CD14-positive monocyte (primary cell): ENCODE measurements at regions of chr10 and their contacts with region 1.

Region 1: DNA sequence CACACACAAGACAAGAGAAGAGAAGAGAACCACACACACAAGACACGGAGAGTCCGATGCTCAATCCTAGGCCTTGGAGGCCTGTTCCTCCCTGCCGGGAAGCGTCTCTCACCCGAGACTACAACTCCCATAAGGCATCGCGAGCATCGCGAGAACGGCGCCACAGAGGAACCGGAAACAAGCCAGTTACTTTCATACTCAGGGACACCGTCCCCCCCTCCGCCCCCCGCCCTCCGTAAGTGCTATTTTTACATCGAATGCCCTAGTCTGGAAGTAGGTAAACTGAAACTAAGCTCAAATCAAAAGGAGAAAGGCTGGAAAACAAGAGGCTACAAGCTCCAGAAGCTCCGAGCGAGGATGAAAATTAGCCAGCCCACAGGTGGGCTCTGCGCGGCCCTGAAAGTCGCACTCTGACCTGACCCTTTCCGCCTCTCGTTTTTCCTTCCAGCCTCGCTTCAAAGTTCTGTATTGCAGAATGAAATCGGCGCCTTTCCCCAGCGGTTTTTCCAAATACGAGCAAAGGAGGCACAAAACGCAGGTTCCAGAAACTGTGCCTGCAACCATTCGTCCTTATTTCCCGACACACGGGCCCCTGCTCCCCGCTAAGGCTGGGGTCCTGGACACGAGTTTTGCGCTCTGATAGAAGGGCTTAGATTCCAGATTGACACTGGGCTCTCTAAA is 11.5 kb upstream of the DNAJC12 start:
- DNase-seq: peak; percentile 88 to 89 (median 89)
- H3K4me3 ChIP-seq: peak overlapping the region; percentile 69 to 96 (median 72)
- H3K4me3 Mint-ChIP-seq: peak overlapping the region; percentile 93 to 99
- H3K27ac ChIP-seq: peak overlapping the region; percentile 71 to 93
- H3K27ac Mint-ChIP-seq: peak overlapping the region; percentile 93 to 99 (median 98)
- H3K4me1 ChIP-seq: peaks cover 0 to 3% of the 10 kb centered on the region in 2 donors
- H3K4me1 Mint-ChIP-seq: peaks cover 8% of the 10 kb centered on the region
- H3K27me3 ChIP-seq: no peaks in the 10 kb centered on the region
- H3K27me3 Mint-ChIP-seq: peaks cover 0 to 4% (median 2%) of the 10 kb centered on the region in 3 donors
- CTCF ChIP-seq: no peak

Region 2: DNA sequence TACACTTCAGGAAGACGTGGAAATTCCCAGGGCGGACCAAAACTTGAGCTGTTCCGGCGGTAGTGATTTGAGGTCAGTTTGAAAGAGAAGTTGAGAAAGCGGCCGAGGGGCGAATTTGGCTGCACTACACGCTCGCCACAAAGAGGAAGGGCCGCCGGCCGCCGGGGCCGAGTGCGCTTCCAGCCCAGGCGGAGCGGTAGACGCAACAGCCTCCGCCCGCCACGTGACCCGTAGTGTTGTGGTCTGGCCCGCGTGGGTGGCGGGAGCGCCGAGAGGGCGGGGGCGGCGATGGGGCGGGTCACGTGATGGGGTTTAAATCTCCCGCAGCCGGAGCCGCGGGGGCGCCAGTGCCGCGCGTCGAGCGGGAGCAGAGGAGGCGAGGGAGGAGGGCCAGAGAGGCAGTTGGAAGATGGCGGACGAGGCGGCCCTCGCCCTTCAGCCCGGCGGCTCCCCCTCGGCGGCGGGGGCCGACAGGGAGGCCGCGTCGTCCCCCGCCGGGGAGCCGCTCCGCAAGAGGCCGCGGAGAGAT is 34.9 kb after region 1 on chr10 and contains the start of gene SIRT1:
- intact Hi-C with region 1: loop called in 1 of 2 experiments (anchors 2 kb)
- DNase-seq: peak; percentile 96 to 97 (median 97)
- H3K4me3 ChIP-seq: peak within 1 kb of the TSS; percentile 59 to 89 (median 69)
- H3K4me3 Mint-ChIP-seq: peak within 1 kb of the TSS; percentile 89 to 94
- H3K27ac ChIP-seq: peak within 1 kb of the TSS; percentile 73 to 87
- H3K27ac Mint-ChIP-seq: peak within 1 kb of the TSS; percentile 93 to 97 (median 96)
- H3K4me1 ChIP-seq: peaks cover 24 to 32% of the 10 kb centered on the region in 2 donors
- H3K4me1 Mint-ChIP-seq: peaks cover 30% of the 10 kb centered on the region
- H3K27me3 ChIP-seq: no peaks in the 10 kb centered on the region
- H3K27me3 Mint-ChIP-seq: peaks cover 0 to 4% (median 2%) of the 10 kb centered on the region in 3 donors
- CTCF ChIP-seq: no peak
- polyA plus RNA-seq, gene SIRT1: 4.4 to 8.4 (median 8.3) TPM

Region 3: GRCh38 chr10:68074775-68075549 is 225.5 kb after region 1 on chr10 and contains the start of gene HERC4:
- intact Hi-C with region 1: loop called in 1 of 2 experiments (anchors 10 kb)
- DNase-seq: peak; percentile 87 to 95 (median 94)
- H3K4me3 ChIP-seq: peak within 1 kb of the TSS; percentile 68 to 100 (median 92)
- H3K4me3 Mint-ChIP-seq: peak within 1 kb of the TSS; percentile 97
- H3K27ac ChIP-seq: peak within 1 kb of the TSS; percentile 96 to 100
- H3K27ac Mint-ChIP-seq: peak within 1 kb of the TSS; percentile 92 to 97 (median 95)
- H3K4me1 ChIP-seq: peaks cover 15 to 31% of the 10 kb centered on the region in 2 donors
- H3K4me1 Mint-ChIP-seq: peaks cover 30% of the 10 kb centered on the region
- H3K27me3 ChIP-seq: no peaks in the 10 kb centered on the region
- H3K27me3 Mint-ChIP-seq: no peaks in the 10 kb centered on the region
- CTCF ChIP-seq: no peak
- polyA plus RNA-seq, gene HERC4: 10.7 to 17.5 (median 14.3) TPM

Region 4: DNA sequence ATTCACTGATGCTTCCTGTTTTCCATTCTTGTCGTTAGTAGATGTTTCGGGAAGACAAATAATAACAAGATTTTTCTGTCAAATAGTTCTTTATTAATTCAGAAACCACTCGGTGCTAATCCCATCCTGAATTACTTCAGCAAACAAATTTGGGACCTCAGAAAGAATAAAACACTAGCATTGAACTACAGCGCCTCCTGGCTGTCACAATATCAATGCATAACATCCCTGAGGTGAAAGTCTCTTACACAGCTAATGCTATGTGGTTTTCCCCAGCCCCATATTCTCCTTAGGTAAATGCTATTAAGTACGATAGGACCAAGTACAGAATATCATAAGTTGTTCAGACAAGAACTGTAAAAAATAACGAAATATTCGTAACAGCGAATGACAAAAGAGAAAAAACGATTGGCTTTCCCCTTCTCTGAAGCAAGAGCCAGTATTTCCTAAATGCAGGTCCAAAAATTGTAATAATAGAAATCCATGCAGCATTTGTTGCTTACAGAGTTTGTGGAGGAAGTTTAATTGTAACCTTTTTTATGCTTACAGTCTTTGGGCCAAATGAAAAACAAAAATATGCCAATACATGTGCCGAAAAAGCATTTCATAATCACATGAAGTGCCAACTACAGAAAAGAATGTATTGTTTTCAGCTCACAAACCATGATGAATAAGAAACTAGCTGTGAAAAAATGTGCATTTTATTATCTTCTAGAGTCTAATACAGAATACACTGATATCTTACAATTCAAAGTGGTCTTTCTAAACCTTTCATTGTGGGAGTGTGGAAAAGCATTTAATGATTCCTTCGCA is 307.1 kb after region 1 on chr10:
- intact Hi-C with region 1: loop called in 1 of 2 experiments (anchors 10 kb)
- DNase-seq: peak; percentile 16 to 61 (median 48)
- H3K4me3 ChIP-seq: no peak overlapping the region
- H3K4me3 Mint-ChIP-seq: no peak overlapping the region
- H3K27ac ChIP-seq: no peak overlapping the region
- H3K27ac Mint-ChIP-seq: no peak overlapping the region
- H3K4me1 ChIP-seq: no peaks in the 10 kb centered on the region
- H3K4me1 Mint-ChIP-seq: no peaks in the 10 kb centered on the region
- H3K27me3 ChIP-seq: no peaks in the 10 kb centered on the region
- H3K27me3 Mint-ChIP-seq: peaks cover 0 to 5% (median 4%) of the 10 kb centered on the region in 3 donors
- CTCF ChIP-seq: peak; percentile 70

Region 5: DNA sequence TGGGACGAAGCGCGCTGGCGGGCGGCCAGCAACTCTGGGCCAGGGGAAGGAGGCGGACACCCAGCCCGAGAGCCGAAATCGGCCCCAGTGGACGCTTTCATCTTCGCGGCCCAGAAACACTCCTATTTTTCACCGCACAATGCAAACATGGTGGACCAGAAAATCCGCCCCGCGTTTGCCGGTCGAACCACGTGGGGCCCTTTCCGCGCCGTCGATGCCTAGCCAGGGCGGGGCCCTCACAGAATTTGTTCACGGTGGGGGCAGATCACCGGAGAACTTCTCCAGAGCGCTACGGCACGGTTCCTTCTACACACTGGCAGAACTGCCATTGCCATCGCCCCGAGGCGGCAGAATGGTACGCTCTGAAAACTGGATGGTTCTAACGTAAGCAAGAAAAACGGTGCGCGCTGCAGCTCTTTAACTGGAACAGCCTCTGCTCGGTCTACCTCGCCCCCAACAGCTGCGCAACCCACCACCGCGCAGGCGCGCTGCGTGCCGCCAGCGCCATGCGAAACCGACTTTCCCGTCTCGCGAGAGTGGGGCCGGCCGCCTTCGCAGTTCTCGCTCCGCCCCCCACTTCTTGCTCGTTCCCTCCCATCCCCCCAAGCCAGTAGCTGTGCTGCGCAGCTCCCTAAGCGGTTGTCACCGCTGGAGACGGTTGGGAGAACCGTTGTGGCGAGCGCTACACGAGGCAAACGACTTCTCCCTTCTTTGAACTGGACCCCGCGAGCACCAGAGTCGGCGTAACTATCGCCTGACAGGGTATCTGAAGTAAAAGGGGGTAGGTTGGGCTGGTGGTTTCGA is 482.2 kb after region 1 on chr10 and contains the start of gene HNRNPH3:
- intact Hi-C with region 1: loop called in 1 of 2 experiments (anchors 10 kb)
- DNase-seq: peak; percentile 97 to 98 (median 97)
- H3K4me3 ChIP-seq: peak within 1 kb of the TSS; percentile 88 to 98 (median 94)
- H3K4me3 Mint-ChIP-seq: peak within 1 kb of the TSS; percentile 98 to 99
- H3K27ac ChIP-seq: peak within 1 kb of the TSS; percentile 90 to 94
- H3K27ac Mint-ChIP-seq: peak within 1 kb of the TSS; percentile 97 to 100 (median 99)
- H3K4me1 ChIP-seq: peaks cover 60 to 80% of the 10 kb centered on the region in 2 donors
- H3K4me1 Mint-ChIP-seq: peaks cover 57% of the 10 kb centered on the region
- H3K27me3 ChIP-seq: no peaks in the 10 kb centered on the region
- H3K27me3 Mint-ChIP-seq: no peaks in the 10 kb centered on the region
- CTCF ChIP-seq: no peak
- polyA plus RNA-seq, gene HNRNPH3: 36.6 to 86.0 (median 71.6) TPM